IMR-90 (cell line): ENCODE measurements at regions of chr2 and their contacts with region 1.

Region 1: GRCh38 chr2:176454893-176455811 is 185.9 kb downstream of the MTX2 start:
- DNase-seq: peak; percentile 65
- ATAC-seq: peak; percentile 98
- H3K4me3 ChIP-seq: no peak overlapping the region
- H3K27ac ChIP-seq: no peak overlapping the region
- H3K4me1 ChIP-seq: no peaks in the 10 kb centered on the region
- H3K27me3 ChIP-seq: peaks cover 1% of the 10 kb centered on the region; the same call in 1 of the 2 replicates
- CTCF ChIP-seq: peak; percentile 86
- POLR2A ChIP-seq: no peak
- RAD21 ChIP-seq: peak; percentile 83

Region 2: GRCh38 chr2:176140513-176141317 is 314.4 kb before region 1 on chr2:
- CTCF ChIA-PET with region 1: interaction called, 24 read pairs
- POLR2A ChIA-PET with region 1: no interaction called
- dilution Hi-C with region 1: no loop called
- in situ Hi-C with region 1: no loop called
- intact Hi-C with region 1: loop called (anchors 1 kb)
- DNase-seq: peak; percentile 46
- ATAC-seq: peak; percentile 95
- H3K4me3 ChIP-seq: peak overlapping the region; percentile 50
- H3K27ac ChIP-seq: no peak overlapping the region
- H3K4me1 ChIP-seq: no peaks in the 10 kb centered on the region
- H3K27me3 ChIP-seq: peaks cover 74% of the 10 kb centered on the region
- CTCF ChIP-seq: peak; percentile 82
- POLR2A ChIP-seq: no peak
- RAD21 ChIP-seq: peak; percentile 93

Region 3: GRCh38 chr2:176193048-176193447 is 262.1 kb before region 1 on chr2:
- CTCF ChIA-PET with region 1: no interaction called
- POLR2A ChIA-PET with region 1: no interaction called
- dilution Hi-C with region 1: no loop called
- in situ Hi-C with region 1: no loop called
- intact Hi-C with region 1: no loop called
- DNase-seq: no peak
- ATAC-seq: no peak
- H3K4me3 ChIP-seq: no peak overlapping the region
- H3K27ac ChIP-seq: no peak overlapping the region
- H3K4me1 ChIP-seq: no peaks in the 10 kb centered on the region
- H3K27me3 ChIP-seq: peaks cover 34% of the 10 kb centered on the region
- CTCF ChIP-seq: no peak
- POLR2A ChIP-seq: no peak
- RAD21 ChIP-seq: no peak

Region 4: GRCh38 chr2:176269319-176270099 is 185.6 kb before region 1 on chr2 and contains the start of gene MTX2:
- CTCF ChIA-PET with region 1: interaction called, 4 read pairs
- POLR2A ChIA-PET with region 1: no interaction called
- dilution Hi-C with region 1: no loop called
- in situ Hi-C with region 1: no loop called
- intact Hi-C with region 1: loop called (anchors 1 kb)
- DNase-seq: peak; percentile 57
- ATAC-seq: peak; percentile 99
- H3K4me3 ChIP-seq: peak within 1 kb of the TSS; percentile 98
- H3K27ac ChIP-seq: peak within 1 kb of the TSS; percentile 90
- H3K4me1 ChIP-seq: no peaks in the 10 kb centered on the region
- H3K27me3 ChIP-seq: no peaks in the 10 kb centered on the region; the same call in 1 of the 2 replicates
- CTCF ChIP-seq: no peak
- POLR2A ChIP-seq: 0 out of 2 replicates have a peak, but pooled peaks have one; percentile 39
- RAD21 ChIP-seq: no peak
- total RNA-seq, gene MTX2: 24.9 and 27.2 TPM in 2 replicates

Region 5: DNA sequence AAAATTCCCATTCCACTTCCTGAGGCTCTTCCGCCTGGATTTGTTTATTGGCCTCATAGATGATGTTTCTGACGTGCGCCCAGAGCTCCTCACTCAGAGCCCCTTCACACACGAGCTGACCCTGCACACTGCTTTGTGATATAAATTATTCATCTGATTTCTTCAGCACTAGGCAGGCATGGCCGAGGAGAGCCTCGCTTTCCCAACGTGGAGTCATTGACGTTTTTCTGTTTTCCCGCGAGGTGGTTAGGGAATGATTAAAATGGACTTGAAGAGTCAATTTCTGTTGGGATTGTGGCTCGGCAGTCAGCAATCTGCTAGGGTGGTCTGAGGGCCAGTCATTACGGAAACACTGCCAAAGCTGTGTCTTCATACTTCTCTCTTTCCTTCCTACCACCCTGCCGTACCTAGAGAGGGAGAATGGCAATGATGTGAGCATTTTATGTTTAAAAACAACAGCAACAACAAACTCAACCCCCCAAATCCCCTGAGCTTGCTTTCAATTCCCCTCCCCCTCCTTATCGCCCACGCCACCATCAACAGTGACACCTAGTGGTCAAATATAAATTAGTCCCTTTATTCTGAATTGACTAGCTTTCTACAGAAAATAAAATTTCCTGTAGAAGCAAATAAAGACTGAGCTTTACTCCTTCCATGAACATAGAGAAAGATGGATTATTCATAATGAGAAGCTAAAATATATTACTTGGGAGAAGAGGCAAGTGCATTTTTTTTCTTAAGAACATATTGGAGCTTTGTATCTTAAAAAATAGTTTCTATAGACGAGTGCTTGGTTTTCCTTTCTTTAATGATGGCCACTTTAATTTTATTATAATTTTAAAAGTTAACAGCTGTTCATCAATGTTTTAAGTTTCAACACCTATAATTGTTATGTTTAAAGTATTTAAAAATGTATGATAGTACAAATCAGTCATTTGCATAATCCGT is 99.2 kb after region 1 on chr2:
- CTCF ChIA-PET with region 1: interaction called, 9 read pairs
- POLR2A ChIA-PET with region 1: no interaction called
- dilution Hi-C with region 1: no loop called
- in situ Hi-C with region 1: no loop called
- intact Hi-C with region 1: loop called (anchors 2 kb)
- DNase-seq: peak; percentile 52
- ATAC-seq: peak; percentile 75
- H3K4me3 ChIP-seq: peak overlapping the region; percentile 38
- H3K27ac ChIP-seq: no peak overlapping the region
- H3K4me1 ChIP-seq: no peaks in the 10 kb centered on the region
- H3K27me3 ChIP-seq: peaks cover 16% of the 10 kb centered on the region
- CTCF ChIP-seq: peak; percentile 80
- POLR2A ChIP-seq: no peak
- RAD21 ChIP-seq: peak; percentile 62

Region 6: GRCh38 chr2:176638167-176639015 is 183.2 kb after region 1 on chr2:
- CTCF ChIA-PET with region 1: interaction called, 3 read pairs
- POLR2A ChIA-PET with region 1: no interaction called
- dilution Hi-C with region 1: no loop called
- in situ Hi-C with region 1: loop called (anchors 10 kb)
- intact Hi-C with region 1: loop called (anchors 1 kb)
- DNase-seq: peak; percentile 45
- ATAC-seq: peak; percentile 92
- H3K4me3 ChIP-seq: peak overlapping the region; percentile 38
- H3K27ac ChIP-seq: no peak overlapping the region
- H3K4me1 ChIP-seq: no peaks in the 10 kb centered on the region
- H3K27me3 ChIP-seq: peaks cover 33% of the 10 kb centered on the region
- CTCF ChIP-seq: peak; percentile 93
- POLR2A ChIP-seq: no peak
- RAD21 ChIP-seq: peak; percentile 92

Region 7: DNA sequence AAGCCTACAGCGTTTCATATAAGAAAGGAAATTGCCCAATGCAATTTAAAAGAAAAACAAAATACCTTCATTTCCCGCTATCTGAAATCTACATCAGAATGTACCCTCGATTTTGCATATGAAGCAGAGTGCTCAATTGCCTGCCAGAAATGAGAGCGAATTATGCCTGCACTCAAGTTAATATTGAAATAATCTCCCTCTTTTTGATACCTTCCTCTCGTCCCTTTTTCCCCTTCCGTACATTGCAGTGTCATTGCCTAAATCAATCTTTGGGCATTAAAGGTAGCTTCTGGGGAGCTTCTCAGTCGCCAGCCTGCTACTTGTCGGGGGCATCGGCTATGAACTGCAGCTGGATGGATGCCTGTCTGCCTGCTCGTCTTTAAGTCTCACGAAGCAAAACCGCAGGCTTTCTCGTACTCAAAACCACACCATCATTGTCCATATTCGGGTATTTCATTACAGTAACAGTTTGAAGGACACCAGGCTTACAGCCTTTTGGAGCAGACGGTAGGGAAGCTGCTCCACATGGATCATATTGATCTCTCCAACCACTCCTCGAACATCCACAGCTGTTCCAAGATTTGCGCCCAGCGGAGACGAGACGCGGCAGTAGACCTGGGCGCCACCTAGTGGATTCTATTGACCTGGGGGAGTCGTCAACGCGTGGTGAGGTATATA is 693.5 kb after region 1 on chr2:
- CTCF ChIA-PET with region 1: no interaction called
- POLR2A ChIA-PET with region 1: no interaction called
- dilution Hi-C with region 1: no loop called
- in situ Hi-C with region 1: no loop called
- intact Hi-C with region 1: loop called (anchors 5 kb)
- DNase-seq: peak; percentile 66
- ATAC-seq: peak; percentile 99
- H3K4me3 ChIP-seq: peak overlapping the region; percentile 71
- H3K27ac ChIP-seq: no peak overlapping the region
- H3K4me1 ChIP-seq: no peaks in the 10 kb centered on the region
- H3K27me3 ChIP-seq: peaks cover 19% of the 10 kb centered on the region
- CTCF ChIP-seq: peak; percentile 80
- POLR2A ChIP-seq: no peak
- RAD21 ChIP-seq: peak; percentile 43